Uterus (tissue), 4 donors: ENCODE measurements at regions of chr14 and their contacts with region 1.

Region 1: GRCh38 chr14:104786091-104786586 is 9.4 kb downstream of the AKT1 start:
- DNase-seq: no peak
- H3K4me3 ChIP-seq: no peak overlapping the region
- H3K27ac ChIP-seq: no peak overlapping the region
- H3K4me1 ChIP-seq: no peaks in the 10 kb centered on the region
- H3K27me3 ChIP-seq: no peaks in the 10 kb centered on the region
- CTCF ChIP-seq: no peak
- POLR2A ChIP-seq: no peak

Region 2: DNA sequence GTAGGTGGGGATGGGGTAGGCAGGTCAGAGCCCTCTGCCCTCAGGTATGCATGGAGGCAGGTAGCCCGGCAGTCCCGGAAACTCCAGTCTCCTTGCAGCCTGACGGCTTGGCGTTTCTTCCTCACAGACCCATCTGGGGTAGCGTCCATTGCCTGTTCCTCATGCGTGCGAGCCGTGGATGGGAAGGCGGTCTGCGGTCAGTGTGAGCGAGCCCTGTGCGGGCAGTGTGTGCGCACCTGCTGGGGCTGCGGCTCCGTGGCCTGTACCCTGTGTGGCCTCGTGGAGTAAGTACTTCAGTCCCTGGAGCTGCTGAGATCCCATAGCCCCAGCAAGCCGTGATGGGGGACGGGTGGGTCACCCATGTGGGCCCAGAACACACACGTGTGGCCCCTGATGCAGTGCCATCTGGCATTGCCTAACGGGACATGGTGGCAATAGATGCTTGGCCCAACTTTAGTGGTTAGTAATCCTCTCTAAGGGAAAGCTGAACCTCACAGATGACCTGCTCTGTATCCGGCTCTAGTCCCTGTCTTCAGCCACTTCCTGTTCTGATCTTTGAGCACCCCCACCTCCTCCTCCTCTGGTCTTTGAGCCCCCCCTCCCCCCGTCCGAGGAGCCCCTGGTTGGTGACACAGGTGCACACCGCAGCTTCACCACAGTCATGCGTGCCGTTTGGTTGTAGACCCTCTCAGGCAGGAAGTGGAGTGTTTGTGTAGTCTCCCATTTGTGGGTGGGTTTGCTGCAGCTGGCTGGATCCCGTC is 29.5 kb before region 1 on chr14:
- intact Hi-C with region 1: loop called (anchors 2 kb)
- DNase-seq: no peak
- H3K4me3 ChIP-seq: no peak overlapping the region
- H3K27ac ChIP-seq: no peak overlapping the region
- H3K4me1 ChIP-seq: peaks cover 7 to 9% of the 10 kb centered on the region in 2 donors
- H3K27me3 ChIP-seq: no peaks in the 10 kb centered on the region
- CTCF ChIP-seq: no peak
- POLR2A ChIP-seq: no peak

Region 3: DNA sequence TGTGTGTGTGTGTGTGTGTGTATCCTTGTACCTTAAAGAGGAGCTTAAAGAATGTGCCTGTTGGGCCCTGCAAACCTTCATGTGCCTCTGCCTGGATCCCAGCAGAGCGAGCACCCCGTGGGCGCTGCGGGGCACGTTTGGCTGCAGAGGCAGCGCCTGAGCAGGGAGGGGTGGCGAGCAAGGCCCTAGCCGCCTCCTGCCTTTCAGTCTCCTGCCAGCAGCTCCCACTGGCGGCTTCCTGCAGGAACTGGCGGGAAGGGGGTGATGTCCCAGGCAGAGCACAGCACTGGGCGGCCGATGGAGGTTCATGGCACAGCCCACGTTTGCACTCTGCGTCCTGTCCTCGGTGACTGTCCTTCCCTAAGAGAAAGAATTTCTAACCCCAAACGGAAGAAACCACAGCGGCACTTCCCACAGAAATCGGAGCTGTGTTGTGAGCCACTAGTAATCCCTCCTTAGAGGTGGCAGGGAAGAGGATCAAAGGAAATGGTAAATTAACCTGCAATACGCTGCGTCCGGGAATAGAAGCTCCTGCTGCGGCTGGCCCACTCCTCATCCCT is 34.6 kb after region 1 on chr14:
- intact Hi-C with region 1: loop called (anchors 5 kb)
- DNase-seq: peak; percentile 36 to 51
- H3K4me3 ChIP-seq: no peak overlapping the region
- H3K27ac ChIP-seq: no peak overlapping the region
- H3K4me1 ChIP-seq: peaks cover 0 to 8% of the 10 kb centered on the region in 2 donors
- H3K27me3 ChIP-seq: no peaks in the 10 kb centered on the region
- CTCF ChIP-seq: peak; percentile 13 to 53 (median 36)
- POLR2A ChIP-seq: no peak